ENCODE measurements at regions of chr12 and their contacts with region 1.

Region 1: DNA sequence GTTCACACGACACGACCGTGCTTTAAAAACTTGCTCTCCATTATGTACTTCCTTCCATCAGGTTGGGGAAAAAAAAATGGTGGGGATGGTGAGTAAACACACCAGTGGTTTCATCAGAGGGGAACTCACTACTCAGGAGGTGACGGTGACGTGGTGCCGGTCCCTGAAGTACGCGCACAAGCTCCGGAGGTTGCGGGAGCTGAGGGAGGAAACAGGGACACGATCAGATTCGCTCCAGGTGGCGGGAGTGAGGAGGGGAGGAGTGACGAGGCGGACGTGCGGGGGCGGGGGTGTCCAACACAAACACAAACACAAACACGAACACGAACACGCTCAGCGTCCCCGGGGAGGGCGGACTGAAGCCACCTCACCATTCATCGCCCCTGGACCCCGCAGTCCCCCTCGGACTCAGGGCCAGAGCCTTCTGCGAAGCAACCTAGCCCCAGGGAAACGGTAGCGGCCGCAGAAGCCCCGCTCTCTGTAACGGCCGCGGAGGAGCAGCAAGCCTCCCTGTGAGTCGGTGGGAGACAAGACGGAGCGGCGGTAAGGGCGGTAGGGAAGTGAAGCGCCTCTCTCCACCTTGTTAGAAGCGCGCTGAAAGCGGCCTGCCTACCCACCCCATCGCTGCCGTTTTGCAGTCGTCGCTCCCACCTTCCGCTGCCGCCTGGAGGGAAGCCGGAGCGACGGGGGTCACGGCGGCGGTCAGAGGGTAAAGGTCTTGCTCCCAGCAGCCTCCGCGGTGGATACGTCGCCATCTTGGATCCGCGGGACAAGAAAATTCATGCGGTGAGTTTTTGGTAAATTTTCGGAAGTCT is at the start of gene CNOT2:
- DNase-seq: peak; percentile 88 to 94 (median 90)
- H3K4me3 ChIP-seq: peak within 1 kb of the TSS; percentile 88 to 93
- H3K4me3 Mint-ChIP-seq: peak within 1 kb of the TSS; percentile 96 to 100 (median 99)
- H3K27ac ChIP-seq: peak within 1 kb of the TSS; percentile 99
- H3K27ac Mint-ChIP-seq: peak within 1 kb of the TSS; percentile 98 to 100 (median 100)
- H3K4me1 ChIP-seq: peaks cover 61% of the 10 kb centered on the region
- H3K4me1 Mint-ChIP-seq: peaks cover 41 to 75% (median 54%) of the 10 kb centered on the region in 4 donors
- H3K27me3 ChIP-seq: no peaks in the 10 kb centered on the region
- H3K27me3 Mint-ChIP-seq: peaks cover 0 to 2% of the 10 kb centered on the region in 2 donors
- total RNA-seq, gene CNOT2: 120 to 121 TPM

Region 2: DNA sequence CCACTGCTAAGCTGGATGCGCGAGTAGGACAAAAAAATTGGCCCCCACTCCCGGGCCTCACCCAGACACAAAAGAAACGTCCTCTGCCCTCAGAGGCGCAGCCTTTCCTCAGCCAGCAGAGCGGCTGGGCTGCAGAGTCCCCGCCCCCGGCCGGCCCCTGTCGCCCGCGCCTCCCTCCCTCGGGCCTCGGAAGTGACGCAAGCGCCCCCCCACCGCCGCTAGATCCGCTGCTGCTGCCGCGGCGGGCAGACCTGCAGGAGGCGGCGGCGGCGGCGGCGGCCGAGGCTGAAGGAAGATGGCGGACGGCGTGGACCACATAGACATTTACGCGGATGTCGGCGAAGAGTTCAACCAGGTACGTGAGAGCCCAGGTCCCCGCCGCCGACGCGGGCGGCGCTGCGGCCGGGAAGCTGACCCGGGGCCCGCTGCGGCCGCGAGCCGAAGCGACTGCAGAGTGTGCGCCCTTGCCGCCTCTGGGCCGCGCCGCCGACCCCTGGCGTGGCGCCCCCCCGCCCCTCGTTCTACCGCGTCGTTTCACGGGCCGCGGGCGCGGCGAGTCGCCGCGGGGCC is 1003.5 kb before region 1 on chr12 and contains the start of gene CPSF6:
- CTCF ChIA-PET with region 1: no interaction called
- POLR2A ChIA-PET with region 1: no interaction called
- intact Hi-C with region 1: loop called (anchors 1 kb)
- DNase-seq: peak; percentile 95 to 96 (median 95)
- H3K4me3 ChIP-seq: peak within 1 kb of the TSS; percentile 60 to 94
- H3K4me3 Mint-ChIP-seq: peak within 1 kb of the TSS; percentile 96 to 100 (median 98)
- H3K27ac ChIP-seq: peak within 1 kb of the TSS; percentile 89
- H3K27ac Mint-ChIP-seq: peak within 1 kb of the TSS; percentile 98 to 100 (median 99)
- H3K4me1 ChIP-seq: peaks cover 52% of the 10 kb centered on the region
- H3K4me1 Mint-ChIP-seq: peaks cover 36 to 57% (median 47%) of the 10 kb centered on the region in 4 donors
- H3K27me3 ChIP-seq: no peaks in the 10 kb centered on the region
- H3K27me3 Mint-ChIP-seq: no peaks in the 10 kb centered on the region
- total RNA-seq, gene CPSF6: 109 to 120 TPM

Region 3: GRCh38 chr12:70255311-70255710 is 12.4 kb after region 1 on chr12:
- CTCF ChIA-PET with region 1: no interaction called
- POLR2A ChIA-PET with region 1: interaction called, 4 read pairs
- intact Hi-C with region 1: loop called (anchors 2 kb)
- DNase-seq: no peak
- H3K4me3 ChIP-seq: no peak overlapping the region
- H3K4me3 Mint-ChIP-seq: peak overlapping the region in 4 of 8 donors; percentile 15 to 63 (median 43)
- H3K27ac ChIP-seq: no peak overlapping the region
- H3K27ac Mint-ChIP-seq: peak overlapping the region in 2 of 7 donors; percentile 38 to 83
- H3K4me1 ChIP-seq: peaks cover 77% of the 10 kb centered on the region
- H3K4me1 Mint-ChIP-seq: peaks cover 57 to 91% (median 70%) of the 10 kb centered on the region in 4 donors
- H3K27me3 ChIP-seq: no peaks in the 10 kb centered on the region
- H3K27me3 Mint-ChIP-seq: no peaks in the 10 kb centered on the region

Region 4: GRCh38 chr12:70305794-70306193 is 62.9 kb after region 1 on chr12:
- CTCF ChIA-PET with region 1: no interaction called
- POLR2A ChIA-PET with region 1: interaction called, 8 read pairs
- intact Hi-C with region 1: loop called (anchors 5 kb)
- DNase-seq: no peak
- H3K4me3 ChIP-seq: no peak overlapping the region
- H3K4me3 Mint-ChIP-seq: peak overlapping the region in 2 of 8 donors; percentile 42 to 47
- H3K27ac ChIP-seq: no peak overlapping the region
- H3K27ac Mint-ChIP-seq: peak overlapping the region in 3 of 7 donors; percentile 24 to 77 (median 69)
- H3K4me1 ChIP-seq: peaks cover 22% of the 10 kb centered on the region
- H3K4me1 Mint-ChIP-seq: peaks cover 37 to 65% (median 50%) of the 10 kb centered on the region in 4 donors
- H3K27me3 ChIP-seq: no peaks in the 10 kb centered on the region
- H3K27me3 Mint-ChIP-seq: no peaks in the 10 kb centered on the region

Region 5: GRCh38 chr12:71663561-71664294 is 1420.8 kb after region 1 on chr12 and contains the start of gene ZFC3H1:
- CTCF ChIA-PET with region 1: no interaction called
- POLR2A ChIA-PET with region 1: interaction called, 6 read pairs
- intact Hi-C with region 1: loop called (anchors 1 kb)
- DNase-seq: peak; percentile 95 to 98 (median 97)
- H3K4me3 ChIP-seq: peak within 1 kb of the TSS; percentile 92 to 95
- H3K4me3 Mint-ChIP-seq: peak within 1 kb of the TSS; percentile 97 to 100 (median 99)
- H3K27ac ChIP-seq: peak within 1 kb of the TSS; percentile 96
- H3K27ac Mint-ChIP-seq: peak within 1 kb of the TSS; percentile 98 to 100 (median 100)
- H3K4me1 ChIP-seq: peaks cover 41% of the 10 kb centered on the region
- H3K4me1 Mint-ChIP-seq: peaks cover 30 to 69% (median 44%) of the 10 kb centered on the region in 4 donors
- H3K27me3 ChIP-seq: no peaks in the 10 kb centered on the region
- H3K27me3 Mint-ChIP-seq: no peaks in the 10 kb centered on the region
- total RNA-seq, gene ZFC3H1: 118 to 121 TPM

Region 6: DNA sequence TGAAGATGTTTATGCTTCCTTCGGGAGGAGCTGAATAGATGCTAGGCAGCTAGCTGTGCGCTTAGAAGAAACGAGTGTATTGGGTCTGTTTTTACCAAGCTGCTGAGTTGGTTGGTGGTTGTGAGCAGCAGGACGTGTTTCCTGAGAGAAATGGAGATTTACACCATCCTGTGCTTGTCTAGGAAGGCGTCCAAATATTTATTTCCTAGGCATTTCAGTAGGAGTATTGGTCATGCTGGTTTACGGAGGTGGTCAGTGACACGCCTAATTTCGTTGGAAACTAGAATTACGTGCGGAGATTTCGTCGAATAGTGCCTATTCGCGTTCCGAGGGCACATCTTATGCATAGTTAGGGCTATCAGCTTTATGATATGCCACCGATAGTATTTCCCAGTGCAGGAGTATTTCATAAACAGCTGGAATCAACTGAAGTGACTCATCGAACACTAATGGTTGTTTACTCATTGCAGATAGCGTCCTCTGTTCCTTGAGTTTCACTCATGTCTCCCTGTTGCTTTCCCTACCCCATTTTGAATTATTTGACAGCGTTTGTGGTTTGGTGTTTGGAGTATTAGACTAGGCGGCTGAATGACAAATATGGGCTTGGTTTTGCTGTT is 1597.4 kb after region 1 on chr12:
- CTCF ChIA-PET with region 1: no interaction called
- POLR2A ChIA-PET with region 1: no interaction called
- intact Hi-C with region 1: loop called (anchors 2 kb)
- DNase-seq: peak in 3 of 5 donors; percentile 6 to 21 (median 10)
- H3K4me3 ChIP-seq: peak overlapping the region; percentile 78 to 90
- H3K4me3 Mint-ChIP-seq: peak overlapping the region; percentile 90 to 98 (median 96)
- H3K27ac ChIP-seq: peak overlapping the region; percentile 98
- H3K27ac Mint-ChIP-seq: peak overlapping the region; percentile 94 to 99 (median 98)
- H3K4me1 ChIP-seq: peaks cover 53% of the 10 kb centered on the region
- H3K4me1 Mint-ChIP-seq: peaks cover 30 to 49% (median 40%) of the 10 kb centered on the region in 4 donors
- H3K27me3 ChIP-seq: no peaks in the 10 kb centered on the region
- H3K27me3 Mint-ChIP-seq: peaks cover 0 to 1% of the 10 kb centered on the region in 2 donors